ENCODE measurements at regions of chr2 and their contacts with region 1.

Region 1: DNA sequence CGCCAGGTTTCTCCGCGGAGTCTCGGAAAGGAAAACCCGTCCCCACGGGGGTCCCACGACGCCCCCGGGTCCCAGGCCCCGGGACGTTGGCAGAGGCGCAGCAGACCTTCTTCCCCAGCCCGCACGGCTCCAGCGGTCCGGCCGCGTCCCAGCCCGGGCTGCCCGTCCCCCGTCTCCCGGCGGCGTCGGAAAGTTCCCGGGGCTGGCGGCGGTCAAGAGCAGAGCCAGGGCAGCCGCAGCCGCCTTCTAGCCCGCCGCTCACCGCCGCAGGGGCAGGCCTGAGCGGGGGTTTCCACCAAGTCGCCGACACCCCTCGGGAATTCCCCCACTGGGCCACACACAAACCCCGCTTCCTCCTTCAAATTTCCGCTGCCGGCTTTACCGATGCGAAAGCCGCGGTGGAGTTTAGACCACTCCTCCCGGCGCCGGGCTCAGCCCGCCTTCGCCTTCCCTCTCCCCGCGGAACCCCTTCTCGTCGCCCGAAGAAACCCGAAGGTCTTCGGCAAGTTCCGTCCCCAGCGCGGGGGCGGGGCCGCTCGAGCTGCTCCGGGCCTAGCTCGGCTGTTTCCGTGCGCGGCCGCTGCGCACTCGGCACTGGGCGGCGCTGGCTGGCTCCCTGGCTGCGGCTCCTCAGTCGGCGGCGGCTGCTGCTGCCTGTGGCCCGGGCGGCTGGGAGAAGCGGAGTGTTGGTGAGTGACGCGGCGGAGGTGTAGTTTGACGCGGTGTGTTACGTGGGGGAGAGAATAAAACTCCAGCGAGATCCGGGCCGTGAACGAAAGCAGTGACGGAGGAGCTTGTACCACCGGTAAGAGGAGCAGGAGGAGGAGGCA is at the start of gene CREB1:
- DNase-seq: peak; percentile 100
- ATAC-seq: peak; percentile 80
- H3K4me3 Mint-ChIP-seq: peak within 1 kb of the TSS; percentile 95
- H3K27ac Mint-ChIP-seq: peak within 1 kb of the TSS; percentile 100
- H3K4me1 Mint-ChIP-seq: peaks cover 74% of the 10 kb centered on the region
- H3K27me3 Mint-ChIP-seq: no peaks in the 10 kb centered on the region
- CTCF ChIP-seq: no peak
- total RNA-seq, gene CREB1: 112 and 127 TPM in 2 replicates

Region 2: DNA sequence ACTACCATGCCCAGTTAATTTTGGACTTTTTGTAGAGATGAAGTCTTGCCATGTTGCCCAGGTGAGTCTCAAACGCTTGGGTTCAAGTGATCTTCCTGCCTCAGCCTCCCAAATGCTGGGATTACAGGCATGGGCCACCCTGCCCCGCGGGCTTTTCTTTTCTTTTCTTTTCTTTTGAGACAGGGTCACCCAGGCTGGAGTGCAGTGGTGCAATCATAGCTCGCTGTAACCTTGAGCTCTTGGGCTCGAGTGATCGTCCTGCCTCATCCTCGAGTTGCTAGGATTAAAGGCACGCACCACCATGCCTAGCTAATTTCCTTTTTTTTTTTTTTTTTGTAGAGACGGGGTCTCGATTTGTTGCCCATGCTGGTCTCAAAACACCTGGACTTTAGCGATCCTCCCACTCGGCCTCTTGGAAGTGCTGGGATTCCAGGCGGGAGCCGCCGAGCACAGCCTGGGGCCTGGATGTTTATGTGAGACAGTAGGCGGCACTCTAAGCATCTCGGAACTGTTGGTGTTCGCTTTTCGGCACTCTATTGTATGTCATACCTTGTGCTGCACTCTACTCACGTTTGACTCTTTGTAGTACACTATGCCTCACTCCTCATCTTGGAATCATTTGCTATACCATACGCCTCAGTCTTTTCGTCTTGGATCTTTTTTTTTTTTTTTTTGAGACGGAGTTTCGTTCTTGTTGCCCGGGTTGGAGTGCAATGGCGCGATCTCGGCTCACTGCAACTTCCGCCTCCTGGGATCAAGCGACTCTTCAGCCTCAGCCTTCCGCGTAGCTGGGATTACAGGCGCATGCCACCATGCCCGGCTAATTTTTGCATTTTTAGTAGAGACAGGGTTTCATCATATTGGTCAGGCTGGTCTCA is 1279.6 kb before region 1 on chr2:
- CTCF ChIA-PET with region 1: no interaction called
- POLR2A ChIA-PET with region 1: no interaction called
- intact Hi-C with region 1: loop called (anchors 2 kb)
- DNase-seq: no peak
- ATAC-seq: no peak
- H3K4me3 Mint-ChIP-seq: peak overlapping the region; percentile 77
- H3K27ac Mint-ChIP-seq: no peak overlapping the region
- H3K4me1 Mint-ChIP-seq: peaks cover 29% of the 10 kb centered on the region
- H3K27me3 Mint-ChIP-seq: peaks cover 29% of the 10 kb centered on the region
- CTCF ChIP-seq: no peak

Region 3: DNA sequence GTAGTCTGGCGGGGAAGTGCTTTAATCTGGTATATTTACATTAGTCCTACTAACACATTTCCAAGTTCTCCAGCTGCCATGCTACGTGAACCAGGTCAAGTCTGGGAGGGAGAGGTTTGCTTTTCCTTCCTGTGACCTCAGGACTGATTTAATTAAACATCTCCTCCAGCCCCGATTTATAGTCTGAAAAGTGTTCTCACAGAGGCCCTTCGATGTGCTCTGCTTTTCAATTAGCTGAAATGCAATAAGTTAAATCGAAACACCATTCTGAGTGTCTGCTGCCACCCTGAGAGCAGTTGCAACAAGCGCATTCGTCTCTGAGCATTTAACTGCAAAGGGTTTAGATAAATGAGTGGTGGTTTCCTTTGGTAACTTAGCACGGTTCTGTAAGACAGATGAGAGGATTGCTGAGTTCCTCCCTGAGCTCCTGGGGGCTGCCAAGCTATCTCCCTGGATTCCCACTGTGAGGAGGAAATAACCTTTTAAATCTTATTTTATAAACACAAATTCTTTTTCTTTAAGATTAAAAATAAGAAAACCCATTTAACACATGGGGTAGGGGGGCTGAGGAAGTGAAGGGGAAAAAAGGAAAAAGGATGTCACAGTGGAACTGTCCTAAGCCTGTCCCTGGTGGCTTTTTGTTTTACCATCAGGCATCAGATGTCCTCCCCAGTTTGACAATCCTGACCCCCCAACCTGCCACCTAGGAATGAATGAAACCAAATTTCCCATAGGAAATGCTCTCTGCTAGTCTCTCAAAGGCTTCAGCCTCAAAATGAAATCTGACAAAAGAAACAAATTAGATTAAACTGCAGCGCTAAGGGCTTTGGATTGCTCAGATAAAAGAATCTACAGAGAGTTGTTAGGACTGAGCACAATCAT is 56.3 kb before region 1 on chr2:
- CTCF ChIA-PET with region 1: no interaction called
- POLR2A ChIA-PET with region 1: interaction called, 4 read pairs
- intact Hi-C with region 1: loop called (anchors 2 kb)
- DNase-seq: no peak
- ATAC-seq: no peak
- H3K4me3 Mint-ChIP-seq: no peak overlapping the region
- H3K27ac Mint-ChIP-seq: no peak overlapping the region
- H3K4me1 Mint-ChIP-seq: peaks cover 8% of the 10 kb centered on the region
- H3K27me3 Mint-ChIP-seq: no peaks in the 10 kb centered on the region
- CTCF ChIP-seq: no peak

Region 4: GRCh38 chr2:207546822-207547221 is 17.3 kb after region 1 on chr2:
- CTCF ChIA-PET with region 1: interaction called, 3 read pairs
- POLR2A ChIA-PET with region 1: interaction called, 16 read pairs
- intact Hi-C with region 1: loop called (anchors 2 kb)
- DNase-seq: no peak
- ATAC-seq: no peak
- H3K4me3 Mint-ChIP-seq: no peak overlapping the region
- H3K27ac Mint-ChIP-seq: no peak overlapping the region
- H3K4me1 Mint-ChIP-seq: peaks cover 61% of the 10 kb centered on the region
- H3K27me3 Mint-ChIP-seq: no peaks in the 10 kb centered on the region
- CTCF ChIP-seq: no peak

Region 5: GRCh38 chr2:207662203-207662602 is 132.7 kb after region 1 on chr2:
- CTCF ChIA-PET with region 1: no interaction called
- POLR2A ChIA-PET with region 1: interaction called, 7 read pairs
- intact Hi-C with region 1: loop called (anchors 1 kb)
- DNase-seq: peak; percentile 33
- ATAC-seq: peak; percentile 97
- H3K4me3 Mint-ChIP-seq: peak overlapping the region; percentile 78
- H3K27ac Mint-ChIP-seq: peak overlapping the region; percentile 97
- H3K4me1 Mint-ChIP-seq: peaks cover 59% of the 10 kb centered on the region
- H3K27me3 Mint-ChIP-seq: no peaks in the 10 kb centered on the region
- CTCF ChIP-seq: no peak

Region 6: DNA sequence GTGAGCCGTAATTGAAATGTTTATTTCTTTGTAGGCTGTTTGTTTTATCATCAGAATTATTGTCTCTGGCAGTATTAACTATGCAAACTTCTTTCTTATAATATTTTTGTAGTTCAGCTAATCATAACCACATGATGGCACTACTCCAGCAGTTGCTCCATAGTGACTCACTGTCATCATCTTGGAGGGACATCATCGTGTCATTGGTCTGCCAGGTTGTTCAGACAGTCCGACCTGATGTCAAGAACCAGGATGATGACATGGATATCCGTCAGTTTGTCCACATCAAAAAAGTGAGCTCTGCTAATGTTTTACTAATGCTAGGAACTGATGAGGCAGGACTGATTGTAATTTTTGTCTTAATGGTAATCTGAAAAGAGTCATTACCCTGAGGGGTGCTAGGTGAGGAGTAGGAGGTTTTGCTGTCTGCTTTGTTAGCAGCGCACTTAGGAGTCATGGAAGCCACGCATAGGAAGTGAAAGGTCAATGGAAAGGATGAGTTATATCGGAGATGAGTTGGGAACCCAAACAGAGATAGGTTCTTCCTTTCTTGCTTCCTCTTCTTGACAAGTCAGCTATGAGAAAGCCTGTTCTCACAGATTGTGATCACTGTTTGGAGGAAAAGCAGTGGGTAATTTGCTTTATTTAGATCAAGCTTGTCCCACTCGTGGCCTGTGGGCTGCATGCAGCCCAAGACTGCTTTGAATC is 785.7 kb after region 1 on chr2:
- CTCF ChIA-PET with region 1: no interaction called
- POLR2A ChIA-PET with region 1: interaction called, 8 read pairs
- intact Hi-C with region 1: loop called (anchors 5 kb)
- DNase-seq: no peak
- ATAC-seq: peak; percentile 54
- H3K4me3 Mint-ChIP-seq: peak overlapping the region; percentile 89
- H3K27ac Mint-ChIP-seq: peak overlapping the region; percentile 93
- H3K4me1 Mint-ChIP-seq: peaks cover 77% of the 10 kb centered on the region
- H3K27me3 Mint-ChIP-seq: no peaks in the 10 kb centered on the region
- CTCF ChIP-seq: no peak

Measured in activated B cell treated with CpG ODN at 0.5 μM for 24 hours (primary cell).